ENCODE measurements at regions of chr11 and their contacts with region 1.

Region 1: DNA sequence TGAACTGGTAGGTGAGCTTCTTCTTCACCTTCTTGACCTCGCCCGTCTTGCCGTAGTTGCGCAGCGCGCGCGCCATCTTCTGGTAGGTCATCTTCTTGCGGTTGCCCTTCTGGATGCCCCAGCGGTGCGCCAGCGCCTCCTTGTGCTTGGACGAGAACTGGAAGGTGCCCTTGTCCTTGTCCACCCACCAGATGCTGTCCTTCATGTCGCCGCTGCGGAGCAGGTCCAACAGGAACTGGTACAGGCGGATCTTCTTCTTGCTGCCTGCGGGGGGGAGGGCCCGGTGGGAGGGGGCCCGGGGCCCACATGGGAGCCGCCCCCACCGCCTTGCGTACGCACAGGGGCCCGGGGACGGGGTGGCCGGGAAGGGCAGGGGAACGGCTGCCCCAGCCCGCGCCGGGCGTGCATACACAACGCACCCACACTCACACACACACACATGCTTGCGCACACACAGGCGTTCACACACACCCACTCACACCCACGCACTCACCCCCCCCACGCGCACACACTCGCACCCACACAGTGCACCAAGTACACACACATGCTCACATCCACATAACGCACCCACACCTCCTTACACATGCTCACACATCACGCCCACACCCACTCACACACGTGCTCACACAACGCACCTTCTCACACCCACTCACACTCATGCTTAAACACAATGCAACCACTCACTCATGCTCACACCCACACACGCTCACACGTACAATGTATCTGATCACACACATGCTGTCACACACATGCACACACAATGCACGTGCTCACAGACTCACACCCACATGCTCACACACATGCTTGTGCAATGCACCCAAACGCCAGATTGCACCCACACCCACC is 3.0 kb upstream of the MYBPC3 start:
- DNase-seq: peak; percentile 95 to 98
- ATAC-seq: peak; percentile 92 to 97 (median 96)
- H3K4me3 ChIP-seq: peak overlapping the region; percentile 74
- H3K27ac ChIP-seq: peak overlapping the region; percentile 90
- H3K4me1 ChIP-seq: peaks cover 5% of the 10 kb centered on the region
- H3K27me3 ChIP-seq: no peaks in the 10 kb centered on the region
- CTCF ChIP-seq: peak; percentile 94

Region 2: DNA sequence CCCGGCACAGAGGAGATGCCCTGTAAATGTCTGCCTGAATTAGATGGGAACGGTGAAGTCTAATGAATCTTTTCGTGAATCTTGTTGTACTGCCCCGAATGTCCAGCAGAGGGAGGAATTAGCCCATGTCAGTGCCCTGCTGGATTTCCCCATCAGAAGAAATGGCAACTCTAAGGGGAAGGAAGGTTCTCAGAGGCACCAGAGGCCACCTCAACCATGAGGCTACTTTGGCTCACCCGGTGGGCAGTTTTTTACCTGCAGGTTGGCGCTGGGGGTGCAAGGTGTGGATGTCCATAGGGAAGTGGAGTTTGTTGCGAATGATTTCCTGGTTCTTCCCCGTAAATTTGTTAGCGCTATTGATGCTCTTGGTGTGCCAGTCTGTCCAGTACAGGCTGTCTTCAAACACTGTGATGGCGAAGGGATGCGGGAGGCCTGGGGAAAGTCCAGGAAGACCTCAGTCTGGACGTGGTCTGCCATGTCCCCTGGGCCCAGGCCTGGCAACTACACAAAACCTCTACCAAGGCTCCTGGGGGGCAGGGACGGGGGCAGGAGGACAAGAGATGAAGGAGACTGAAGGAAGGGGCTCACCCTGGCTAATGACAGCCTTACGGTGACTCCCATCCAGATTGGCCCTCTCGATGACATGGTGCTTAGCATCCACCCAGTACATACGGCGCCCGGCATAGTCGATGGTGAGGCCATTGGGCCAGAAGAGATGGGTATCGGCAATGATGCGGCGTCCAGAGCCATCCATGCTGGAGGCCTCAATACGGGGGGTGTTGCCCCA is 465.6 kb before region 1 on chr11:
- intact Hi-C with region 1: loop called (anchors 10 kb)
- DNase-seq: peak; percentile 28 to 65
- ATAC-seq: peak; percentile 80 to 94 (median 91)
- H3K4me3 ChIP-seq: no peak overlapping the region
- H3K27ac ChIP-seq: no peak overlapping the region
- H3K4me1 ChIP-seq: no peaks in the 10 kb centered on the region
- H3K27me3 ChIP-seq: no peaks in the 10 kb centered on the region
- CTCF ChIP-seq: peak; percentile 87

Region 3: GRCh38 chr11:47186076-47186936 is 169.2 kb before region 1 on chr11 and contains the start of gene PACSIN3:
- intact Hi-C with region 1: loop called (anchors 5 kb)
- DNase-seq: peak; percentile 74 to 83
- ATAC-seq: peak; percentile 34 to 42 (median 37)
- H3K4me3 ChIP-seq: peak within 1 kb of the TSS; percentile 93
- H3K27ac ChIP-seq: peak within 1 kb of the TSS; percentile 95
- H3K4me1 ChIP-seq: peaks cover 40% of the 10 kb centered on the region
- H3K27me3 ChIP-seq: no peaks in the 10 kb centered on the region
- CTCF ChIP-seq: peak; percentile 9
- total RNA-seq, gene PACSIN3: 210 to 430 (median 348) TPM

Region 4: DNA sequence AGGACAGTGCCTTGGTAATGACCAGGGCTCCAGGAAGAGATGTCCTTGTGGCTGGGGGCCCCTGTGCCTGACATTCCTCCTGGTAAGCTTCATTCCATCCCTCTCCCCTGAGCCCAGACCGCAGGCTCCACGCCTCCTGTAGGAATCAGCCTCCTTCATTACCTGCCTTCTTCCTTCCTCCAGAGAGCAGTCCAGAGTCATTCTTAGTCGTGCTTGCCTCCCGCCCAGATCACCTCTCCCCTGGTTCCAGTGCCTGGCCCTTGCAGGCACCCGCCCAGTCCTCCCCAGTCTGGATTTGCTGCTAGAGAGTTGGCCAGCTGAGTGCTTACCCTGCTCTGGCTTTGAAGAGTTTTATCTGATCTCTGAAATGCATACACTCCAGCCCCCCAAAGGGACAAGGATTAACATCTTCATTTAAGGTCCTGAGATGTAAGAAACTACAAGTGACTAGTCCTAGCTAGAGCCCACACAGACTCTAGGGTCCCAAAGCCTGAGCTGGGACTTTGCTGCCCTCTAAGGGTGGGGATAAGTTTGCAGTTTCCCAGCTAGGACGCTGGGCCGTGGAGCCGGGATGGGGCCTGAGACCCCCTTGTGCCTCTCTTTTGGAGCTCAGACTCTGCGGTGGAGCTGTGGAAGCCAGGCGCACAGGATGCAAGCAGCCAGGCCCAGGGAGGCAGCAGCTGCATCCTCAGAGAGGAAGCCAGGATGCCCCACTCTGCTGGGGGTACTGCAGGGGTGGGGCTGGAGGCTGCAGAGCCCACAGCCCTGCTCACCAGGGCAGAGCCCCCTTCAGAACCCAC is 96.1 kb before region 1 on chr11:
- intact Hi-C with region 1: loop called (anchors 1 to 5 kb)
- DNase-seq: peak in 1 of 2 donors; percentile 54
- ATAC-seq: peak; percentile 50 to 62 (median 62)
- H3K4me3 ChIP-seq: peak overlapping the region; percentile 55
- H3K27ac ChIP-seq: peak overlapping the region; percentile 9
- H3K4me1 ChIP-seq: peaks cover 8% of the 10 kb centered on the region
- H3K27me3 ChIP-seq: no peaks in the 10 kb centered on the region
- CTCF ChIP-seq: peak; percentile 68

Region 5: DNA sequence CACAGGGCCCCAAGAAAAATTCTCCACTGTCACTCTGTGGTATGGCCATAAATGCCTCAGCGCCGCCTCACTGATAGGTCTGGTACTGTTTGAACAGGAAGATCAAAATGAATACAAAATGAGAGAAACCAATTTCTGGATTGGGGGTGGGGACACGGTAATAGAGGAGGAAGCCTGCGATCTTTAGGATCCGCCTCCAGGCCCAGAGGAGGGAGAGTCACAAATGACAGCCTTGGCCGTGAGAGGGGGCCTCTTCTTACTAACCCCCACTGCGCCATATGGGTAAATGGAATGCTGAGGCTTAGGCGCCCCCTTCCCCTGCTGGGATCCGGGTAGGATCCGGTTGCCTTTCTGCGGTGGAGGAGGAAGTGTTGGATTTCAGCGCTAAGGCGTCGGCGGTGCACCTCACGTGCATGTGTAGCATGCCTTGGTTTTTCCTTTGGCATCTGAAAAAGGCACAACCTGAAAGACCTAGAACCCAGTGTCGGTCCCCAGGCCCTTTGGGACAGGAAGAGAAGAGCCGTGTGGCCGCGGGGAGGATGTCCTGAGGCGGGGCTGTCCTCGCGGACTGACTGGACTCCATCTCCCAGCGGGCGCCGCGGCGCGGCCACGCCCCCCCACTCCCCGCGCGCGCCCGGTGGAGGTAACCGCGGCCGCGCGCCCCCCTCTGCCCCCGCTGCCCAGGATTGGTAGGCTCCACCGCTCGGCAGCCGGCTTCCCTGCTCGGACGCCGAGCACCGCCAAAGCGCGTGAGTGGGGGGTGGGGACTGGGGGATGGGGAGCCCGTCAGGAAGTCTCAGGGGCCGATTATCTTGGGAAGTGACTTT is 86.3 kb before region 1 on chr11:
- intact Hi-C with region 1: loop called (anchors 2 to 5 kb)
- DNase-seq: peak; percentile 93 to 96
- ATAC-seq: peak; percentile 89 to 90 (median 90)
- H3K4me3 ChIP-seq: peak overlapping the region; percentile 88
- H3K27ac ChIP-seq: peak overlapping the region; percentile 96
- H3K4me1 ChIP-seq: peaks cover 46% of the 10 kb centered on the region
- H3K27me3 ChIP-seq: no peaks in the 10 kb centered on the region
- CTCF ChIP-seq: no peak